Activated T-helper 1 cell treated with anti-CD3 and anti-CD28 coated beads, Interleukin-12 subunit alpha, Interleukin-12 subunit beta, Interleukin-2, Interleukin-4 antibody, amounts not matched to agents 30 ng/mL and 10 ng/mL and 1 ng/mL, durations not matched to agents 14 hours and 24 hours and 36 hours (primary cell): ENCODE measurements at regions of chr6 and their contacts with region 1.

Region 1: DNA sequence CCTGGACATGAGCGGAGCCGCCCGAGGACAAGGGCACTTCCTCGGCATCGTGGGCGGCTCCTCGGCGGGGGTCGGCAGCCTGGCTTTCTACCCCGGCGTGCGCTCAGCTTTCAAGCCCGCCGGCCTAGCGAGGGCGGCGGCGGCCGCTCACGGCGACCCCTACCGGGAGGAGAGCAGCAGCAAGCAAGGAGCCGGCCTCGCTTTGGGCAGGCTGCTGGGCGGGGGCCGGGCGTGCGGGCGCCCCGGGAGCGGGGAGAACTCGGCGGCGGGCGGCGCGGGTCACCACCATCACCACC is 6.7 kb downstream of the PRDM13 start:
- DNase-seq: no peak
- H3K4me3 Mint-ChIP-seq: no peak overlapping the region
- H3K27ac Mint-ChIP-seq: no peak overlapping the region
- H3K4me1 Mint-ChIP-seq: peaks cover 30% of the 10 kb centered on the region
- H3K27me3 Mint-ChIP-seq: peaks cover 70% of the 10 kb centered on the region

Region 2: DNA sequence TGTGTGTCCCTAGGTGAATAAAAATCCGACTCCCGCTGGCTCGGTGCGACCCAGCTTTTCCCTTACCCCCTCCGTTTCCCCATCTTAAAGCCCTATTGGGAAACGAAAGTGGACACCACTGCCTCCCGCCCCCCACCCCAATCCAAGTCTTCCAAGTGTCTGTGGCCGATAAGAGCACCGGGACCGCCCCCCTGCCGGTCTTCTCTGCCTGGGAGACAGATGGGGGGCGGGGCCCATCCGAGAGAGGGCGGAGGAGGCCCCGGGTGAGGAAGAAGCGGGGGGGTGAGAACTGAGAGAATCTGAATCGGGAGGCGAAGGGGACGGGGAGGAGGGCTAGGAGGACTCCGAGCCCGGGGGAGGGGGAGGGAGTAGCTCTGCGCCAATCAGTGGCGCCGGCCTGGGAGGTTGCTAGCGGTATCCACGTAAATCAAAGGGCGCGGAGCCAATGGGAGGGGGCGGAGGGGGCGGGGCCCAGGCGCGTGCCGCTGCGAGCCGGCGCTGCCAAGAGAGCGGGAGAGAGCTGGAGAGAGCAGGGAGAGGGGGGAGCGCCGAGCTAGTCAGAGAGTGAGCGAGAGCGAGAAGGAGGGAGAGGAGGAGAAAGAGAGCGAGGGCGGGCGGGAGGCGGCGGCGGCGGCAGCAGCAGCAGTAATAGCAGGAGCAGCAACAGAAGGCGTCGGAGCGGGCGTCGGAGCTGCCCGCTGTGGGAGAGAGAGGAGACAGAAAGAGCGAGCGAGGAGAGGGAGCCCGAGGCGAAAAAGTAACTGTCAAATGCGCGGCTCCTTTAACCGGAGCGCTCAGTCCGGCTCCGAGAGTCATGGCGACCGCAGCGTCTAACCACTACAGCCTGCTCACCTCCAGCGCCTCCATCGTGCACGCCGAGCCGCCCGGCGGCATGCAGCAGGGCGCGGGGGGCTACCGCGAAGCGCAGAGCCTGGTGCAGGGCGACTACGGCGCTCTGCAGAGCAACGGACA is 779.0 kb before region 1 on chr6 and contains the start of gene POU3F2:
- intact Hi-C with region 1: loop called (anchors 2 kb)
- DNase-seq: peak; percentile 33
- H3K4me3 Mint-ChIP-seq: peak within 1 kb of the TSS; percentile 84
- H3K27ac Mint-ChIP-seq: peak within 1 kb of the TSS; percentile 87
- H3K4me1 Mint-ChIP-seq: peaks cover 17% of the 10 kb centered on the region
- H3K27me3 Mint-ChIP-seq: peaks cover 81% of the 10 kb centered on the region
- total RNA-seq, gene POU3F2: not detected in 2 replicates

Region 3: GRCh38 chr6:99520855-99521632 is 92.3 kb before region 1 on chr6:
- intact Hi-C with region 1: loop called (anchors 2 kb)
- DNase-seq: peak; percentile 68
- H3K4me3 Mint-ChIP-seq: peak overlapping the region; percentile 98
- H3K27ac Mint-ChIP-seq: peak overlapping the region; percentile 96
- H3K4me1 Mint-ChIP-seq: peaks cover 20% of the 10 kb centered on the region
- H3K27me3 Mint-ChIP-seq: peaks cover 11% of the 10 kb centered on the region

Region 4: DNA sequence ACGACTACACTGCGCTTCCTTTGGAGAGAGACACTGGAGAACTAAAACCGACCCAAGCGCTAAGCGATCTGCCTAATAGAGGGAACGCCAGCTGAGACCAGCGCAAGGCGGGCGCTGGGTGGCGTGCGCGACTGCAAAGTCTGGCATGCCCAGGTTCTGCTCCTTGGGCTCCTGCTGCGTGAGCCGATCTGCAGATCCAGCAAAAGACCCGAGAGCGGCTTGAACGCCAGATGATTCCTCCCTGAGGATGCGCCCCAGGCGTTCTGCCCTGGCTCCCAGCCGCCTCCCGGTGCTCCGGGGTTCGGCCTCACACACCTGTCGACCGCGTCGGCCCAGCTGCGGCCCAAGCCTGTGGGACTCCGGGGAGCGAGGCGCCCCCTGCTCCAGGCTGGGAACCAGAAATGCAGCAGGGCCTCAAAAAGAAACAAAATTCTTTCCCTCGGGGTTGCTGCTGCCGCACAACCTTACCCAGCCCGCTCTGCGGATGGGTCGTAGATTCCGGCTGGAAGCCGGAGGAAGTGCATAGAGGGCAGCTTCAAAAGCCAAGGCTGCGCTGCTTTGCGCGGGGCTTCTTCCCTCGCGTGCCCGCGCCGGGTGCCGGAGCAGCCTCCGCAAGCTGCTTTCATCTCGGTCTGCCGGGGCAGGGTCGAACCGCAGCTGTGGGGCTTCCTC is 24.6 kb before region 1 on chr6:
- intact Hi-C with region 1: loop called (anchors 2 kb)
- DNase-seq: peak; percentile 43
- H3K4me3 Mint-ChIP-seq: peak overlapping the region; percentile 86
- H3K27ac Mint-ChIP-seq: peak overlapping the region; percentile 29
- H3K4me1 Mint-ChIP-seq: peaks cover 34% of the 10 kb centered on the region
- H3K27me3 Mint-ChIP-seq: peaks cover 80% of the 10 kb centered on the region

Region 5: DNA sequence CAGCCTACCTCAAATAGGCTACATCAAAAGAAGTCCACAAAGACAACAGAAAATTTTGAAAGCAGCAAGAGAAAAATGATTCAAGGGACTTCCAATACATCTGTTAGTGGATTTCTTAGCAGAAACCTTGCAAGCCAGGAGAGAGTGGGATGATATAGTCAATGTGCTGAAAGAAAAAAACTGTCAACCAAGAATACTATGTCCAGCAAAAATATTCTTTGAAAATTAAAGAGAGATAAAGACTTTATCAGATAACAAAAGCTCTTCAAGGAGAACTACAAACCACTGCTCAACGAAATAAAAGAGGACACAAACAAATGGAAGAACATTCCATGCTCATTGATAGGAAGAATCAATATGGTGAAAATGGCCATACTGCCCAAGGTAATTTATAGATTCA is 346.7 kb after region 1 on chr6:
- intact Hi-C with region 1: no loop called
- DNase-seq: no peak
- H3K4me3 Mint-ChIP-seq: no peak overlapping the region
- H3K27ac Mint-ChIP-seq: no peak overlapping the region
- H3K4me1 Mint-ChIP-seq: no peaks in the 10 kb centered on the region
- H3K27me3 Mint-ChIP-seq: no peaks in the 10 kb centered on the region

Region 6: DNA sequence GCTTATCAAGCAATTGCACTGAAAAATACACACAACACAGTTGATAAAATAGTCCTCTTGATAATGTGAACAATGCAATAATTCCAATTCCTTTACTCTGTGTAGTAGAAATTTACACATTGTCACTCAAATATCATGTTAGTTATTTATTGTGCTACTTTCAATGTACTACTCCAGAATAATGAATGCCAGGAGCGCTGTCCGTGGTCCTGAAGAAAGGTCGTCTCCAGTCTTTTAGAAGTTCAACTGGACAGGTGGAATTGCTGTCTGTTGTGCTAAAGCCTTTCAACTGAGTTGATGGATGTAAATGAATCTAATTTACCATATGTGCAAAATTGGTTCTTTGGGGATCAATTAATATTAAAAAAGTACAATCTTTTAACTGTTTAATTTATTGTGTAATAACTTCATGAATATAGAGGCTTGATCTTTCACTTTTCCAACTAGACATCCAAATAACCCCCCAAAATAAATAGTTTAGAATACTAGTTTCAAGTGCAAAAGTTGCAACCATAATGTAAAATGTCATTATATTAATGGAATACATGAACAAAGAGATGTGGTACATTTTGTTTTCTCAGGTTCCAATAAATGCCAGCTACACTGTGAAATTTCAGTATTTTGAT is 1783.3 kb after region 1 on chr6:
- intact Hi-C with region 1: loop called (anchors 5 kb)
- DNase-seq: peak; percentile 19
- H3K4me3 Mint-ChIP-seq: no peak overlapping the region
- H3K27ac Mint-ChIP-seq: no peak overlapping the region
- H3K4me1 Mint-ChIP-seq: no peaks in the 10 kb centered on the region
- H3K27me3 Mint-ChIP-seq: peaks cover 45% of the 10 kb centered on the region